Activated CD8-positive, alpha-beta memory T cell treated with anti-CD3 and anti-CD28 coated beads, Interleukin-2, amount 10 ng/mL, durations not matched to agents 7 days and 5 days (primary cell): ENCODE measurements at regions of chr22 and their contacts with region 1.

Region 1: DNA sequence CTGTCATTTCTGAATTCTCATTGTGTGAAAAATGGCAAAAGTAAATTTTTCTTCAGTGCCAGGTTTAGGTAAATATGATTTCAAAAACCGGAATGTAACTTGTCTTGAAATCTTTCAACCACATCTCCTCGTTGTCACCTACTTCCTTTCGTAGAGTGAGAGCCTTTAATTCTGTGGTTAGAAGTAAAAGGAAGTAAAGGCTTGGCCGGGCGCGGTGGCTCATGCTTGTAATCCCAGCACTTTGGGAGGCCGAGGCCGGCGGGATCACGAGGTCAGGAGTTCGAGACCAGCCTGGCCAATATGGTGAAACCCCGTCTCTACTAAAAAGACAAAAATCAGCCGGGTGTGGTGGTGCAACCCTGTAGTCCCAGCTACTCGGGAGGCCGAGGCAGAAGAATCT is 29.8 kb downstream of the SGSM3 start:
- DNase-seq: peak; percentile 80
- ATAC-seq: no peak
- H3K4me3 Mint-ChIP-seq: peak overlapping the region; percentile 28
- H3K27ac Mint-ChIP-seq: peak overlapping the region; percentile 75
- H3K4me1 Mint-ChIP-seq: peaks cover 50% of the 10 kb centered on the region
- H3K27me3 Mint-ChIP-seq: no peaks in the 10 kb centered on the region

Region 2: GRCh38 chr22:40323681-40324171 is 76.4 kb before region 1 on chr22:
- CTCF ChIA-PET with region 1: no interaction called
- DNase-seq: peak; percentile 66
- ATAC-seq: peak; percentile 41
- H3K4me3 Mint-ChIP-seq: peak overlapping the region; percentile 72
- H3K27ac Mint-ChIP-seq: peak overlapping the region; percentile 96
- H3K4me1 Mint-ChIP-seq: peaks cover 57% of the 10 kb centered on the region
- H3K27me3 Mint-ChIP-seq: no peaks in the 10 kb centered on the region

Region 3: DNA sequence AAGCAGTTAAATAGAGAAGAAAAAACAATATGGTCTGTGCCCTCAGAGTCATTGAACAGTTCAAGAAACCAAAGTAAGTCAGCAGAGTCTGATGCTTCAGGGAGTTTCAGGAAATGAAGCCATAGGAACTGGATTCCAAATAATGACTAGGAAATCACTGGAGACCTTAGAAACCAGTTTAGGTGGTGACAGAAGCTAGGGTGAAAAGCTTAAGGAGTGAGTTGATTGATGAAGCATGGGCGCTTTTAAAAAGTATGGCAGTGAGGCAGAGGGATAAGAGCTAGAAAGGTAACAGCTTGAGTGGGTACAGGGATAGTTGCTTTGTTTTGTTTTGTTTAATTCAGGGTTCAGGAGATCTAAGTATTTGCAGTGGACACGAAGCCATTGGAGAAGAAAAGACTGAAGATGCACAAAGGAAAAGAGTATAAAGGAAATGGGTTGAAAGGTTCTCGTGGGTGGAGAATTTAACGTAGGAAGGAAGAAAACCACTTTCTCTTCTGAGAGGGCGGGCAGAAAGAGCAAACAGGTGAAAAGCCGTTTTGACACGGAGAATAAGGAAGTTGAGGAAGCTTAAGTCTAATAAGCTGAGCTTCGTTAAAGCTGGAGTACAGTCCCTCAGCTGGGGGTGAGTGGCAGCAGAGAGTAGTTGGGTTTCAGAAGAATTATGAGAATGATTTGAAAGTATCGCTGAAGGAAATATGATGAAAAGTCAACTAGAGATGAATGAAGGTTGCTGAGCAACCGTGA is 14.9 kb before region 1 on chr22:
- CTCF ChIA-PET with region 1: interaction called, 16 read pairs
- DNase-seq: peak; percentile 50
- ATAC-seq: peak; percentile 66
- H3K4me3 Mint-ChIP-seq: peak overlapping the region; percentile 74
- H3K27ac Mint-ChIP-seq: peak overlapping the region; percentile 88
- H3K4me1 Mint-ChIP-seq: peaks cover 25% of the 10 kb centered on the region
- H3K27me3 Mint-ChIP-seq: no peaks in the 10 kb centered on the region

Region 4: DNA sequence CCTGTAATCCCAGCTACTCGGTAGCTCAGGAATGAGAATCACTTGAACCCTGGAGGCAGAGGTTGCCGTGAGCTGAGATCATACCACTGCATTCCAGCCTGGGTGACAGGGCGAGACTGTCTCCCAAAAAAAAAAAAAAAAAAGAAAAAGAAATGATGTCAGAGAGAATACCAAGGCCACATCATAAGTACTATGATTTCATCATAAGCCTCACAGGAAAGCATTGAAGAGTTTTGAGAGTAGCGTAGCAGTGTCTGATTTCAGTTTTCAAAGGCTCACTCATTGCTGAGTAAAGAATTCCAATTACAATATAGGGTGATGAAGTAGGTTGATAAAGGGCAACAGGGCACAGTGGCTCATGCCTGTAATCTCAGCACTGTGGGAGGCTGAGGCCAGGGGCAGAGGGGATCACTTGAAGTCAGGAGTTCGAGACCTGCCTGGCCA is 147.6 kb after region 1 on chr22:
- CTCF ChIA-PET with region 1: no interaction called
- DNase-seq: no peak
- ATAC-seq: no peak
- H3K4me3 Mint-ChIP-seq: no peak overlapping the region
- H3K27ac Mint-ChIP-seq: no peak overlapping the region
- H3K4me1 Mint-ChIP-seq: peaks cover 3% of the 10 kb centered on the region
- H3K27me3 Mint-ChIP-seq: no peaks in the 10 kb centered on the region